PC-9 (cell line): ENCODE measurements at regions of chr10 and their contacts with region 1.

Region 1: GRCh38 chr10:13556676-13557319 is 28.0 kb upstream of the BEND7 start:
- DNase-seq: peak in 1 of 2 experiments; percentile 71
- H3K4me3 ChIP-seq: no peak overlapping the region
- H3K27ac ChIP-seq: no peak overlapping the region
- H3K4me1 ChIP-seq: 0 out of 2 replicates have a peak, but pooled peaks cover 7% of the 10 kb centered on the region
- H3K27me3 ChIP-seq: peaks cover 45% of the 10 kb centered on the region
- CTCF ChIP-seq: no peak

Region 2: DNA sequence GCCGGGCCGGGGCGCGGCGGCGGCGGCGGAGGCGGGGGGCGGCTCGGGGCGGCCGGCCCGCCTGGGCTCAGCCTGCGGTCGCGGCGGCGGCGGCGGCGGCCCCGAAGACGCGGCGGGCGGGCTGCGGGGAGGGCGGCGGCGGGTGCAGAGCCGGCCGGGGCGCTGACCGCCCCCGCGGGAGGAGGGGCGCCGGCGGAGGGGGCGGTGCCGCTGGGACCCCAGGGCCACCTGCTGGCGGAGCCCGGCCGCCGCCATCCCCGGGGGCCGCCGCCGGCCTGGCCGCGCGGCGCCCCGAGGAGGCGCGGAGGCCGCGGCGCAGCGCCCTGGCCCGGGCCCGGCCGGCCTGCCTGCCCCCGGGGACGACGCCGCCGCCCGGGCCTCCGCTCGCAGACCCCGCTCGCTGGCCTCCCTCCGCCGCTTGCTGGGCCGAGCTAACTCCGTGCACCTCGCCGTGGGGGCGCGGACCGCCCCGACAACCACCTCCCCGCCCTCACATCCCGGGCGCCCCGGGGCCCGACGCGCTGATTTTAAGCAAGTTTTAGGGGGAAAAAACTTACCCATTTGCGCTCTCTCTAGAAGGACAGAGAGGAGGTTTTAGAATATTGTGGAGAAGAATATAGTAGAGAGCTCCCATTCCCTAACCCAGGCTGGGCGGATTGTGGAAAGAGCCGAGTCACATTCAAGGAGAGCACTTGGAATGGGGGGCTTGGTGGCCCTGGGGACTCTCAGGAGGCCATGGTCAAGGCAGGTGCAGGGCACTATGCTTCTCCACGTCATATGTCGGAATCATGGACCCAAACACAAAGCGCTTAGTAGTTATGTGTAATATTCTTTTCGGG is 27.7 kb before region 1 on chr10 and contains the start of gene BEND7:
- CTCF ChIA-PET with region 1: no interaction called
- POLR2A ChIA-PET with region 1: interaction called, 16 read pairs
- intact Hi-C with region 1: no loop called
- DNase-seq: no peak
- H3K4me3 ChIP-seq: no peak within 1 kb of the TSS
- H3K27ac ChIP-seq: no peak within 1 kb of the TSS
- H3K4me1 ChIP-seq: no peaks in the 10 kb centered on the region
- H3K27me3 ChIP-seq: peaks cover 50% of the 10 kb centered on the region
- CTCF ChIP-seq: no peak
- total RNA-seq, gene BEND7: 1.7 and 3.2 TPM in 2 replicates